ENCODE measurements at regions of chr1 and their contacts with region 1.

Region 1: GRCh38 chr1:86833461-86834215 is 80.3 kb downstream of the SELENOF start:
- DNase-seq: peak; percentile 23
- H3K4me3 Mint-ChIP-seq: no peak overlapping the region
- H3K27ac Mint-ChIP-seq: no peak overlapping the region
- H3K4me1 Mint-ChIP-seq: peaks cover 5% of the 10 kb centered on the region
- H3K27me3 Mint-ChIP-seq: peaks cover 8% of the 10 kb centered on the region

Region 2: GRCh38 chr1:86852782-86853408 is 19.3 kb after region 1 on chr1:
- intact Hi-C with region 1: no loop called
- DNase-seq: no peak
- H3K4me3 Mint-ChIP-seq: no peak overlapping the region
- H3K27ac Mint-ChIP-seq: no peak overlapping the region
- H3K4me1 Mint-ChIP-seq: no peaks in the 10 kb centered on the region
- H3K27me3 Mint-ChIP-seq: no peaks in the 10 kb centered on the region

Region 3: GRCh38 chr1:86965012-86965826 is 131.6 kb after region 1 on chr1:
- intact Hi-C with region 1: loop called (anchors 1 kb)
- DNase-seq: no peak
- H3K4me3 Mint-ChIP-seq: no peak overlapping the region
- H3K27ac Mint-ChIP-seq: no peak overlapping the region
- H3K4me1 Mint-ChIP-seq: peaks cover 6% of the 10 kb centered on the region
- H3K27me3 Mint-ChIP-seq: no peaks in the 10 kb centered on the region

Region 4: GRCh38 chr1:87084244-87084836 is 250.7 kb after region 1 on chr1:
- intact Hi-C with region 1: loop called (anchors 1 kb)
- DNase-seq: no peak
- H3K4me3 Mint-ChIP-seq: no peak overlapping the region
- H3K27ac Mint-ChIP-seq: no peak overlapping the region
- H3K4me1 Mint-ChIP-seq: peaks cover 22% of the 10 kb centered on the region
- H3K27me3 Mint-ChIP-seq: no peaks in the 10 kb centered on the region

Measured in activated T-helper 2 cell treated with anti-CD3 and anti-CD28 coated beads, Interferon-gamma antibody, Interleukin-2, Interleukin-4, amounts not matched to agents 10 μg/mL and 5 μg/mL and 100 μg/mL, durations not matched to agents 14 hours and 24 hours and 36 hours (primary cell).